Caco-2 (cell line): ENCODE measurements at regions of chr5 and their contacts with region 1.

Region 1: DNA sequence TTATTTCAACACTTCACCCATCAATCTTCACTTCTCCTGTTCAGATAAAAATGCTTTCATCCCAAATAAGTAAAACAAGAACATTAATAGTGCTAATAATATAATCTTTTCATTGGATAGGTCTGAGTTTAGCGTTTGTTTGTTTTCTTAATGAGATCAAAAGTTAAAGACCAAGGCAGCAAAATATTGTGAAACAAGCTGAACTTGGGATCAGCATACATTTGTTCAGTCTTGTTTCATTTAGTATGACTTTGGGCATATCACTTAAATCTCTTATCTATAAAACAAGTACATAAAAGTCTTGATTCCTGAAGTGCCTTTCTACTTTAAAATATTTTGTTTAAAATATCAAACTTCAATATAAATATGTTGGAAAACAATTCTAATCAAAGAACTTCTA is 13.4 kb upstream of the SNX24 start:
- DNase-seq: no peak
- H3K4me3 ChIP-seq: no peak overlapping the region
- H3K4me3 Mint-ChIP-seq: no peak overlapping the region
- H3K27ac Mint-ChIP-seq: no peak overlapping the region
- H3K4me1 ChIP-seq: no peaks in the 10 kb centered on the region
- H3K4me1 Mint-ChIP-seq: no peaks in the 10 kb centered on the region
- H3K27me3 ChIP-seq: no peaks in the 10 kb centered on the region
- H3K27me3 Mint-ChIP-seq: no peaks in the 10 kb centered on the region
- CTCF ChIP-seq: no peak

Region 2: DNA sequence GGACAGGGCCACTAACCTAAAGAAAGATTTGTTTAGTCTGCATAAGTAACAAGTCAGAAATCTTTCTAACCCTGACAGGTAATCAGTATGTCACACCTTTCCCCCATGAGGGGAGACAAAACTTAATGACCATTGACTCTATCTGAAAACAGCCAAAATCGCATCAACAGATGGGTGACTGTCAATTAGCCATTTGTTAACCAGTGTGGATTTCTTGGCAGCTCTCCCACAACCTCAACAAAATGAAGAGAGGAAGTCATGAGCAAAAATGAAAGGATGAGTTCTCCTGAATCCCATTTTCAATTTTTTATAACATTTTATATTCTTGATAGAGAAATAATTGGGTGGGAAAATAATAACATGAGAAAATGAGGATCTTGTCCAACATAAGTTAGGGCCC is 141.7 kb before region 1 on chr5:
- CTCF ChIA-PET with region 1: no interaction called
- POLR2A ChIA-PET with region 1: no interaction called
- intact Hi-C with region 1: no loop called
- DNase-seq: no peak
- H3K4me3 ChIP-seq: no peak overlapping the region
- H3K4me3 Mint-ChIP-seq: no peak overlapping the region
- H3K27ac Mint-ChIP-seq: no peak overlapping the region
- H3K4me1 ChIP-seq: no peaks in the 10 kb centered on the region
- H3K4me1 Mint-ChIP-seq: no peaks in the 10 kb centered on the region
- H3K27me3 ChIP-seq: no peaks in the 10 kb centered on the region
- H3K27me3 Mint-ChIP-seq: peaks cover 2% of the 10 kb centered on the region
- CTCF ChIP-seq: no peak

Region 3: GRCh38 chr5:122704243-122705036 is 127.5 kb before region 1 on chr5:
- CTCF ChIA-PET with region 1: no interaction called
- POLR2A ChIA-PET with region 1: no interaction called
- intact Hi-C with region 1: loop called (anchors 5 kb)
- DNase-seq: peak in 1 of 2 experiments; percentile 48
- H3K4me3 ChIP-seq: no peak overlapping the region
- H3K4me3 Mint-ChIP-seq: no peak overlapping the region
- H3K27ac Mint-ChIP-seq: no peak overlapping the region
- H3K4me1 ChIP-seq: peaks cover 19% of the 10 kb centered on the region
- H3K4me1 Mint-ChIP-seq: peaks cover 8% of the 10 kb centered on the region
- H3K27me3 ChIP-seq: no peaks in the 10 kb centered on the region
- H3K27me3 Mint-ChIP-seq: no peaks in the 10 kb centered on the region
- CTCF ChIP-seq: peak; percentile 71 to 75

Region 4: DNA sequence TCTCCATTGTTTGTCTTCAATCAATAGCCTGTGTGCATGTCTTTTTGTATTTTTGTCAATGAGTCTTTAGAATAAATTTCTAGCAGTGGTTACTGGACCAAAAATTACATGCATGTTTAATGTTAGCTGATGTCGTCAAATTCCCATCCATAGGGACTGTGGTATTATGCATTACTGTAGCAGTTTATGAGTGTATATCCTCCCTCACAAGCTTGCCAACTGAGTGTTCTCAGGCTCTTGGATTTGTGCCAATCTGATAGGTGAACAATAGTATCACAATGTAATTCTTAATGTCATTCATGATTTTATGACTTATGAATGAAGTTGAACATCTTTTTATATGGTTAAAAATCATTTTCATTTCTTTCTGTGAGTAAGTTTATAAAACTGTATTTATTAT is 26.5 kb after region 1 on chr5:
- CTCF ChIA-PET with region 1: no interaction called
- POLR2A ChIA-PET with region 1: no interaction called
- intact Hi-C with region 1: loop called (anchors 1 kb)
- DNase-seq: no peak
- H3K4me3 ChIP-seq: no peak overlapping the region
- H3K4me3 Mint-ChIP-seq: no peak overlapping the region
- H3K27ac Mint-ChIP-seq: no peak overlapping the region
- H3K4me1 ChIP-seq: peaks cover 25% of the 10 kb centered on the region
- H3K4me1 Mint-ChIP-seq: peaks cover 14% of the 10 kb centered on the region
- H3K27me3 ChIP-seq: no peaks in the 10 kb centered on the region
- H3K27me3 Mint-ChIP-seq: no peaks in the 10 kb centered on the region
- CTCF ChIP-seq: no peak